HEK293 (cell line): ENCODE measurements at regions of chr1 and their contacts with region 1.

Region 1: GRCh38 chr1:150259758-150260669 is 2.4 kb downstream of the CA14 start:
- H3K4me3 ChIP-seq: no peak overlapping the region
- H3K27ac ChIP-seq: no peak overlapping the region
- H3K4me1 ChIP-seq: peaks cover 12% of the 10 kb centered on the region; the same call in 1 of the 2 replicates
- CTCF ChIP-seq: no peak

Region 2: GRCh38 chr1:150168960-150169601 is 90.9 kb before region 1 on chr1:
- CTCF ChIA-PET with region 1: no interaction called
- POLR2A ChIA-PET with region 1: no interaction called
- H3K4me3 ChIP-seq: no peak overlapping the region
- H3K27ac ChIP-seq: no peak overlapping the region
- H3K4me1 ChIP-seq: no peaks in the 10 kb centered on the region
- CTCF ChIP-seq: peak; percentile 67

Region 3: DNA sequence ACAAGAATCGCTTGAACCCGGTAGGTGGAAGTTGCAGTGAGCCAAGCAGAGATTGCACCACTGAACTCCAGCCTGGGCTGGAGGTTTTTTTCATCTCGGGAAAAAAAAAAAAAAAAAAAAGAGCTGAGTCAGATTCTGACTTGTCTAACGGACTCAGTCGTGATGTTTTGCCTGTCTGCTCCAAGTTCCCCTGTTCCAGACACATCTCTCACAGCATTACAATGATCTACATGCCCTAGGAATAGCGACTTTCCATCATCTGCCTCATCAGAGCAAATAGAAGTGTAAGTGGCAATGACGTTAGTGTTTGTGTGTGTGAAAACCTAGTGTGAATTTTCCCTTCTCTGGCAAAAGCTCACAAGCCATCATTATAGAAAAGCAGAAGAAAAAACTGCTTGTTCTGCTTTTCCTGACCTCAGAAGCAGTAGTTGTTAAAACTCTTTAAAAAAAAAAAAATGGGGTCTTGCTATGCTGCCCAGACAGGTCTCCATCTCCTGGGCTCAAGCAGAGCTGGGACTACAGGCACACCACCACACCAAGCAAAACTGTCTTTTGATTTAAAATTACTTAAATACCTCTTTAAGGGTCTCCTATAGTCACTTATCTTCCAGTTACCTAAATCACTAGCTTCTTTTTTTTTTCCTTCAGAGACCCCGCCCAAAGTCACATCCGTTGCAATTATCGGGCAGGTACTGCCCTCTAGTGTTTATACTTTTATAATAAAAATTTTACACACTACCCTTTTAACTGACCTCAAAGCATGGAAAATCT is 73.0 kb before region 1 on chr1:
- CTCF ChIA-PET with region 1: no interaction called
- POLR2A ChIA-PET with region 1: no interaction called
- H3K4me3 ChIP-seq: no peak overlapping the region
- H3K27ac ChIP-seq: no peak overlapping the region
- H3K4me1 ChIP-seq: peaks cover 3% of the 10 kb centered on the region; the same call in 1 of the 2 replicates
- CTCF ChIP-seq: peak; percentile 27; the same call in 1 of the 2 replicates

Region 4: GRCh38 chr1:150235852-150236613 is 24.0 kb before region 1 on chr1 and contains the start of gene ANP32E:
- CTCF ChIA-PET with region 1: interaction called, 12 read pairs
- POLR2A ChIA-PET with region 1: no interaction called
- H3K4me3 ChIP-seq: peak within 1 kb of the TSS; percentile 89
- H3K27ac ChIP-seq: peak within 1 kb of the TSS; percentile 82
- H3K4me1 ChIP-seq: no peaks in the 10 kb centered on the region; the same call in 1 of the 2 replicates
- CTCF ChIP-seq: peak; percentile 71; the same call in 1 of the 2 replicates

Region 5: GRCh38 chr1:150281837-150282653 is 22.0 kb after region 1 on chr1 and contains the start of gene CIART:
- CTCF ChIA-PET with region 1: interaction called, 101 read pairs
- POLR2A ChIA-PET with region 1: interaction called, 3 read pairs
- H3K4me3 ChIP-seq: peak within 1 kb of the TSS; percentile 28
- H3K27ac ChIP-seq: no peak within 1 kb of the TSS; the same call in 1 of the 2 replicates
- H3K4me1 ChIP-seq: no peaks in the 10 kb centered on the region
- CTCF ChIP-seq: no peak

Region 6: GRCh38 chr1:150295476-150295875 is 35.5 kb after region 1 on chr1:
- CTCF ChIA-PET with region 1: interaction called, 10 read pairs
- POLR2A ChIA-PET with region 1: no interaction called
- H3K4me3 ChIP-seq: no peak overlapping the region
- H3K27ac ChIP-seq: no peak overlapping the region
- H3K4me1 ChIP-seq: no peaks in the 10 kb centered on the region
- CTCF ChIP-seq: no peak

Region 7: GRCh38 chr1:150995896-150996295 is 735.9 kb after region 1 on chr1:
- CTCF ChIA-PET with region 1: interaction called, 10 read pairs
- POLR2A ChIA-PET with region 1: no interaction called
- H3K4me3 ChIP-seq: no peak overlapping the region
- H3K27ac ChIP-seq: no peak overlapping the region
- H3K4me1 ChIP-seq: no peaks in the 10 kb centered on the region
- CTCF ChIP-seq: peak; percentile 73